Panc1 (cell line): ENCODE measurements at regions of chr19 and their contacts with region 1.

Region 1: DNA sequence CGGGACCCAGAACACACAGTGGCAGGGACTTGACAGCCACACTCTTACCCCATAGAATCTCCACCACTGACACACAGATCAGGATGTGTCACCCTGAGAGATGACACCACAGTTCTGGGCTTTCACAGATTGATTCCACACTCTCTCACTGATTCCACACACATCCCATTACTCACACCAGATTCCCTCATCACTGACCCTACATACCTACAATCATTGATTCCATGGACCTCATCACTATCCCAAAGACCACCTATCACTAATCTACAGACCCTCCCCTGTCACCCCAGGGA is 57.6 kb upstream of the ZNF527 start:
- DNase-seq: no peak
- ATAC-seq: no peak
- H3K4me3 ChIP-seq: peak overlapping the region; percentile 39 to 71
- H3K27ac ChIP-seq: peak overlapping the region; percentile 29; the same call in 1 of the 2 replicates
- H3K4me1 ChIP-seq: peaks cover 17% of the 10 kb centered on the region
- H3K27me3 ChIP-seq: no peaks in the 10 kb centered on the region
- CTCF ChIP-seq: no peak

Region 2: GRCh38 chr19:37334179-37335071 is 21.1 kb after region 1 on chr19:
- CTCF ChIA-PET with region 1: no interaction called
- POLR2A ChIA-PET with region 1: interaction called, 14 read pairs
- in situ Hi-C with region 1: no loop called
- intact Hi-C with region 1: no loop called
- DNase-seq: peak; percentile 64
- ATAC-seq: peak; percentile 99
- H3K4me3 ChIP-seq: peak overlapping the region; percentile 89 to 97
- H3K27ac ChIP-seq: peak overlapping the region; percentile 96
- H3K4me1 ChIP-seq: peaks cover 27% of the 10 kb centered on the region
- H3K27me3 ChIP-seq: no peaks in the 10 kb centered on the region
- CTCF ChIP-seq: no peak

Region 3: DNA sequence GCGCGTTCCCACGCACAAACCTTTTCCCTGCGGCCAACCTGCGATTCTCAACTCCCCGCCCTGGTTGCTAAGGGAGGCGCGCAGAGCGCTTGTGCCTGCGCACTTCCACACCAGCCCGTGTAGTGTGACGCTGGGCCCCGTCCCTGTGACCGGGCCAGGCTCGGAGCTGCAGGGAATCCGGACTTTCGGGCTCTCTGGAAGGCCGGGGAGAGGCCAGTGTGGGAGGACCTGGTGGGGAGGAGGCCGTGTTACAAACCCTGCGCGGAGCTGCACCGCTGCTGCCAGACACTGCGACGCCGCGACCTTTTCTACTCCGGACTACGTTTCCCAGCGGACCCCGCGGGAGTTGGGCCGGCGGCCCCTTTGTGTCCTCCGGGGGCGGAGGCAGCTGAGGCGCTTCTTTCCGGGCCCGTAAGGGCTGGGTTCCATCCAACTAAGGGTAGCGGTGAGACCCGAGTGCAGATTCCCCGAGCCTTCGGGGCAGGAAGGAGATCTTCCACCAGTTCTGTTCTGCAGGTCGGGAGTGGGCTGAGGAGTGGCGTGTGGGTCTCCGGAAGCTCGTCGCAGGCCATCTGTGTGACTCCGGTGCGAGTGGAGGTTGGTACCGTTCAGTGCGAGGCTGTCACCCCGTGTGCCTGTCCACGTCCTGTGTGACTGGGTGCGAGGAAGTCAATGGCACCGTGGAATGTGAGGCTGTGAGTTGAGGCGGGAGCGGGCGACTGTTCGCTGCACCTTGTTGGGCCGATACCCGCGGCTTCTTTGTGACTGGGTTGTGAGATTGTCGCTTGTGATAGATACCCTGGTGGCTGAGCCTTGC is 155.9 kb after region 1 on chr19 and contains the start of gene ZNF570:
- CTCF ChIA-PET with region 1: no interaction called
- POLR2A ChIA-PET with region 1: no interaction called
- in situ Hi-C with region 1: no loop called
- intact Hi-C with region 1: no loop called
- DNase-seq: peak; percentile 73
- ATAC-seq: peak; percentile 89
- H3K4me3 ChIP-seq: peak within 1 kb of the TSS; percentile 85 to 93
- H3K27ac ChIP-seq: peak within 1 kb of the TSS; percentile 94
- H3K4me1 ChIP-seq: peaks cover 7% of the 10 kb centered on the region; the same call in 1 of the 2 replicates
- H3K27me3 ChIP-seq: no peaks in the 10 kb centered on the region
- CTCF ChIP-seq: no peak
- total RNA-seq, gene ZNF570: 10.1 TPM

Region 4: GRCh38 chr19:38924388-38924787 is 1611.1 kb after region 1 on chr19:
- CTCF ChIA-PET with region 1: no interaction called
- POLR2A ChIA-PET with region 1: interaction called, 12 read pairs
- in situ Hi-C with region 1: no loop called
- intact Hi-C with region 1: no loop called
- DNase-seq: no peak
- ATAC-seq: no peak
- H3K4me3 ChIP-seq: no peak overlapping the region
- H3K27ac ChIP-seq: no peak overlapping the region
- H3K4me1 ChIP-seq: peaks cover 1% of the 10 kb centered on the region
- H3K27me3 ChIP-seq: no peaks in the 10 kb centered on the region
- CTCF ChIP-seq: no peak